ENCODE measurements at regions of chr20 and their contacts with region 1.

Region 1: DNA sequence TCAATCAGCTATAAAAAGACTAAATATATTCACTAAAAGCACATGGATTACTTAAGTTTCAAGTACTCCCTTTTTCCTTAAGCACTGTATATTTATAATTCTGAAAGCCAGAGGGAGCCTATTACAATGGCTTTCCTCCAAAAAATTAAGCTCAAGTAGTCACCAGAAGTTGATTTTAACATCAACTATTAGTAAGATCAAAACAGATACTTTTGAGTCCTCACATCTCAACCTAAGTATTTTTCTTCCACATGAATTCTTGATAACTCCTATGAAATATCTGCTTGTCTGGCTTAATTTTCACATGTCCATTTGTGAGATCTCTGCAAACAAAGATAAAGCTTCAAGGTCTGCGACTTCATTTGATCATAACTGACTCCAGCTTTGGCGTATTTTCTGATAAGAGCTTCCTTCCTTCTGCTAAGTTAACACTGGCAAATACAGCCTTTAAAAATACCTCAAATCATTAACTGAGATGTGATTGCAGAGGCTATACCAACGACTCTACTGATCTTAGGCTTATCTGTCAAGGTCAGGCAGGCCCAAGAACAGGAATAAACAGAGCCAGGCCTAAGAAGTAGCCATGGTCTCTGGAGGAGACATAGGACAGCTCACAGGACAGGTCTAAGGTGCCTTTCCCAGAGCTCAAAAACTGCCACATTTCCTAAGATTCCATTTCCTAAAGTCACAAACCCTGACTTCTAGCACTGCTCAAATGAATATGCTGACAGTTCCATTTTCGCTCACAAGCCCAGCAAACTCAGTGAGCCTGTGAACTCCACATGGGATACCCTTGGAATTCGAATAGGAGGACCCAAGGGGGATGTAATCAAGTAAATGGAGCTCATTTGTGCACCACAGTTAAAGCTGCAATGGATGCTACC is 10.0 kb downstream of the SNX5 start:
- DNase-seq: no peak
- ATAC-seq: no peak
- H3K4me3 Mint-ChIP-seq: peak overlapping the region; percentile 31
- H3K27ac Mint-ChIP-seq: peak overlapping the region; percentile 59
- H3K4me1 Mint-ChIP-seq: peaks cover 64% of the 10 kb centered on the region
- H3K27me3 Mint-ChIP-seq: no peaks in the 10 kb centered on the region

Region 2: GRCh38 chr20:17735206-17735804 is 223.3 kb before region 1 on chr20:
- POLR2A ChIA-PET with region 1: no interaction called
- DNase-seq: no peak
- ATAC-seq: no peak
- H3K4me3 Mint-ChIP-seq: no peak overlapping the region
- H3K27ac Mint-ChIP-seq: no peak overlapping the region
- H3K4me1 Mint-ChIP-seq: peaks cover 1% of the 10 kb centered on the region
- H3K27me3 Mint-ChIP-seq: peaks cover 15% of the 10 kb centered on the region

Region 3: DNA sequence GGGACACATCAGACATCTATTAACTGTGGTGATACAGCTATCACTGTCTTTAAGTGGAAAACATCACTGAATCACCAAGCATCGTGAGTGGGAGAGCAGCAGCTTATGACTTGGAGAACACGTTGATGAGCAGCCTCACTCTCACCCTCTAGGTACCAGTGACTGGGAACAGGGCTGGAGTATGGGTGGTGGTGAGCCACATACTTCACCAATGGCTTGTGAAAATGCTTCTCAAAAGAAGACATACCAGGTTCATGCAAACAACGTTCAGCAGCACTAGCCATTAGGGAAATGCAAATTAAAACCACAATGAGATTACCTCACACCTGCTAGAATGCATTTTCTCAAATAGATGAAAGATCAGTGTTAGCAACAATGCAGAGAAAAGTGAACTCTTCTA is 15.3 kb before region 1 on chr20:
- POLR2A ChIA-PET with region 1: no interaction called
- DNase-seq: no peak
- ATAC-seq: no peak
- H3K4me3 Mint-ChIP-seq: no peak overlapping the region
- H3K27ac Mint-ChIP-seq: peak overlapping the region; percentile 24
- H3K4me1 Mint-ChIP-seq: peaks cover 17% of the 10 kb centered on the region
- H3K27me3 Mint-ChIP-seq: no peaks in the 10 kb centered on the region

Region 4: GRCh38 chr20:17968366-17969279 is 10.0 kb after region 1 on chr20 and contains the starts of genes MGME1 and SNX5:
- POLR2A ChIA-PET with region 1: interaction called, 73 read pairs
- DNase-seq: peak; percentile 98
- ATAC-seq: peak; percentile 93
- H3K4me3 Mint-ChIP-seq: peak within 1 kb of the TSS; percentile 96
- H3K27ac Mint-ChIP-seq: peak within 1 kb of the TSS; percentile 96
- H3K4me1 Mint-ChIP-seq: peaks cover 39% of the 10 kb centered on the region
- H3K27me3 Mint-ChIP-seq: no peaks in the 10 kb centered on the region
- total RNA-seq, gene MGME1: 32.2 to 37.5 TPM
- total RNA-seq, gene SNX5: 127 to 131 TPM